Prostate gland (tissue), 2 donors: ENCODE measurements at regions of chr6 and their contacts with region 1.

Region 1: GRCh38 chr6:150016324-150017185 is 8.8 kb downstream of the RAET1L start:
- DNase-seq: peak; percentile 74
- H3K4me3 ChIP-seq: no peak overlapping the region
- H3K27ac ChIP-seq: no peak overlapping the region
- H3K4me1 ChIP-seq: no peaks in the 10 kb centered on the region
- H3K27me3 ChIP-seq: peaks cover 3% of the 10 kb centered on the region
- CTCF ChIP-seq: peak; percentile 52 to 82 (median 71)
- POLR2A ChIP-seq: no peak

Region 2: GRCh38 chr6:149761438-149761837 is 255.1 kb before region 1 on chr6:
- intact Hi-C with region 1: no loop called
- DNase-seq: no peak
- H3K4me3 ChIP-seq: no peak overlapping the region
- H3K27ac ChIP-seq: no peak overlapping the region
- H3K4me1 ChIP-seq: no peaks in the 10 kb centered on the region
- H3K27me3 ChIP-seq: no peaks in the 10 kb centered on the region
- CTCF ChIP-seq: no peak
- POLR2A ChIP-seq: no peak

Region 3: DNA sequence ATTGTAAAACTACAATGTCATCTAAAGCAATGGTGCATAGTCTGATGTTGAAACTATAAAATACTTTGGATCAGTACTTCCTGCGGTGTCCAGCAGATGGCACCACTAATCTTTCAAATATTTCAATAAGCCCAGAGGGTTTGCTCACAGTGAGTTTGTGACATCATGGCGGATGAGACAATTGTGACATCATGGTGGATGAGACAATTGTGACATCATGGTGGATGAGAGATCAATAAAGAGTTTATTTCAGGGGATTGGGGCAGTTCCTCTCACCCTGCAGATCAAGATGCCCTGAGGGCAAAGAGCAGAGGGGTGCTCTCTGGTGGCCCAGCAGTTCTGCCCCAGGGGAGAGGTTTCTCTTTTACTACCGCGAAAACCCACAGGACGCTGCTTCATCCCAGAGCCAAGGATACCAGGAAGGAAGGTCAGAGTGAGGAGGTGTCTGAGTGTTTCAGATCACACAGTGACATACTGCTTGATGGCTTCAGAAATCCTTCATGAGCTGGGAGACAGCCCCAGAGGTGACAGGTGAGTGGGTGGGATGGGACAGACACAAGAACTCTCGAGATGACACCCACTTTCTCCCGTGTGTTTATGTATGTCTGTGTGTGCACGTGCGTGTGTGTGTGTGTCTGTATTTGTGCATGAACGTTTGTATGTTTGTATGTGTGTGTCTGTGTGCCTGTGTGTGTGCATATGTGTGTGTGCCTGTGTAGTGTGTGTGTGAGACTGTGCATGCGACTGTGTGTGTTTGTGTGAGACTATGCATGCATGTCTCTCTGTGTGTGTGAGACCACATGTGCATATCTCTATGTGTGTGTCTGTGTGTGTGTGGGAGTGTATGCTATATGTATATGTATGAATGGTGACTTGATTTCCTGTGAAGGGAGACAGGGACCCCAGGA is 82.1 kb before region 1 on chr6:
- intact Hi-C with region 1: loop called (anchors 2 kb)
- DNase-seq: peak; percentile 69
- H3K4me3 ChIP-seq: no peak overlapping the region
- H3K27ac ChIP-seq: no peak overlapping the region
- H3K4me1 ChIP-seq: peaks cover 5% of the 10 kb centered on the region
- H3K27me3 ChIP-seq: peaks cover 21% of the 10 kb centered on the region
- CTCF ChIP-seq: peak; percentile 60 to 89 (median 86)
- POLR2A ChIP-seq: no peak